HepG2 (cell line): ENCODE measurements at regions of chr21 and their contacts with region 1.

Region 1: DNA sequence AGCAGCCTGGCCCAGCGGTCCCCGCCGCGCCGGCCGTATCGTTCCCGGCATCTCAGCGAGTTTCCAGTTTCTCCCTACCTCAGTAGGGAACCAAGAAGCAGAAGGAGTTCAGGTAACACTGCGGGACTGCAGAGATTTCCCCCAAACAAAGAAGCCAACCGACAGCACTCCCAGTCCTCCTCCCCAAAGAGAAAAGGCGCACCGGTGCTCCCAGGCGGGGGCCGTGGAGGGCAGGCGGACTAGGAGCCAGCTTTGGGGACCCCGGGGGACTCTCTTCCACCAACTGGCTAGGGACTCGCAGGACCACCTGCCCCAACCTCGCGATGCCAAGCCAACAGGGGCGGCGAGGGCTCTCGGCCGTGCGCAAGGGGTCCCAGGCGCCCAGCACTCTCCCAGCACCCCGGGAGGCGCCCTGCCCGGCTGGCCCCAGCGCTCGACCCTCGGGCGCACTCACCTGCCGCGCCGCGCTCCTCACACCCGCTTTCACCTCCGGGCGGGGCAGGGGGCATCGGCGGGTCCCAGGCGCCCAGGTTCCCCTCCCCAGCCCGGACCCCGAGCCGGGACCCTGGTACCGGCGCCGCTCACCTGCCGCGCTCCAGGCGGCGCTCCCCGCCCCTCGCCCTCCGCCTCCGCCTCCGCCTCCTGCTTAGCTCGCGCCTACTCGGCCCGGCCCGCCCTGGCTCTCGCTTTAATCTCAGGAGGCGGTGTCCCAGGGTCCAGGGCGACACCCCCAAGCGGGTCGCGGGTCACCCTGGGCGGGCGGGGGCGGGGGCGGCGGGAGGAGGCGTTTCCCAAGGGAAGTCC is at the start of gene TMPRSS2:
- DNase-seq: no peak
- ATAC-seq: peak; percentile 73
- H3K4me3 ChIP-seq: peak within 1 kb of the TSS; percentile 52 to 67 (median 58); a peak in 5 of 6 replicates
- H3K27ac ChIP-seq: no peak within 1 kb of the TSS
- H3K4me1 ChIP-seq: peaks cover 39% of the 10 kb centered on the region
- H3K27me3 ChIP-seq: peaks cover 2 to 31% of the 10 kb centered on the region in 2 experiments; a peak in 4 of 5 replicates
- CTCF ChIP-seq: no peak
- EP300 ChIP-seq: no peak
- POLR2A ChIP-seq: no peak
- RAD21 ChIP-seq: no peak
- total RNA-seq, gene TMPRSS2: 0.86 and 1.8 TPM in 2 replicates

Region 2: GRCh38 chr21:41497008-41497407 is 10.7 kb before region 1 on chr21:
- CTCF ChIA-PET with region 1: no interaction called
- POLR2A ChIA-PET with region 1: interaction called, 18 read pairs
- in situ Hi-C with region 1: no loop called
- intact Hi-C with region 1: no loop called
- DNase-seq: peak; percentile 76
- ATAC-seq: peak; percentile 84
- H3K4me3 ChIP-seq: no peak overlapping the region
- H3K27ac ChIP-seq: peak overlapping the region; percentile 32
- H3K4me1 ChIP-seq: peaks cover 57% of the 10 kb centered on the region
- H3K27me3 ChIP-seq: no peaks in the 10 kb centered on the region
- CTCF ChIP-seq: no peak
- EP300 ChIP-seq: peak in 1 of 2 experiments; percentile 25; a peak in 1 of 4 replicates
- POLR2A ChIP-seq: no peak
- RAD21 ChIP-seq: no peak

Region 3: GRCh38 chr21:41535819-41536640 is 28.3 kb after region 1 on chr21:
- CTCF ChIA-PET with region 1: no interaction called
- POLR2A ChIA-PET with region 1: no interaction called
- in situ Hi-C with region 1: no loop called
- intact Hi-C with region 1: loop called (anchors 1 kb)
- DNase-seq: no peak
- ATAC-seq: peak; percentile 30; the same call in 1 of the 3 replicates
- H3K4me3 ChIP-seq: no peak overlapping the region
- H3K27ac ChIP-seq: no peak overlapping the region
- H3K4me1 ChIP-seq: peaks cover 14% of the 10 kb centered on the region
- H3K27me3 ChIP-seq: peaks cover 0 to 18% of the 10 kb centered on the region in 2 experiments; a peak in 4 of 5 replicates
- CTCF ChIP-seq: no peak
- EP300 ChIP-seq: no peak
- POLR2A ChIP-seq: no peak
- RAD21 ChIP-seq: no peak

Region 4: DNA sequence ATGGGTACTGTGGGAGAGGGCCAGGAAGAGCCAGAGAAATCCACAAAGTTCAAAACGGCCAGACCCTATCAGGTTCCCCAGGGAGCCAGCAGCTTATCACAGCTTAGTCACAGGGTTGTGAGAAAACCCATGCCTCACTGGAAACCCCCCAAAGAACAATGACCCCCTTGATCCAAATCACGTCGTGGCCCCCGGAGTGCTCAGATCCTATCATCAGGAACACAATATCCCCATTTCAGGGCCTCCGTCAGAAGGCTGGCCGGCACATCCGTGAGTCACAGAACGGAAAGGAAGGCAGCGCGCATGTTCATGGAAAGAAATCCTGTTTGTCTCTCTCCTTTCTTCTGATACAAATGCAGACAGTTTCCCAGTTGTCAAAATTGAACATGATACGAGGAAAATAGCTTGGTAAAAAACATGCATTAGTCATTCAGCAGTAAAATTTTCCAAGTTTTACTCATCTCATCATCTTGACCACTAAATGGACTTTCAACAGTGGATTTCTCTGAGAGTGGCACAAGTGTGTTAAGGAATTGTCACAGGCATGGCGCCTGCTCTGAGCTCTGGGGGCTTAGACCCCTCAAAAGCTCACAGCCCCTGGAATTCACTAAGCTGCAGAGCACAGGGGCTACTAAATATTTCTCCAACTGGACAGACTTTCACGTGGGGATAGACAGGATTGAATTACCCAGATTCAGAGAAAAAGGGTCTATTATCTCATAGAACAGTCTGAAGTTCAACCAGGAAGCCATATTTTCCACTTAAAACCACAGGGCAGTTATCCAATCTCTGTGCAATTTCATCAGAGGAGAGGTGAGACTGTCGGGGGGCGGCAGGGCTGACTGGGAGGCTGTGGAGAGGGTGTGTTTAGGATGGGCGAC is 134.4 kb after region 1 on chr21:
- CTCF ChIA-PET with region 1: no interaction called
- POLR2A ChIA-PET with region 1: no interaction called
- in situ Hi-C with region 1: no loop called
- intact Hi-C with region 1: no loop called
- DNase-seq: peak; percentile 41
- ATAC-seq: peak; percentile 49; the same call in 2 of the 3 replicates
- H3K4me3 ChIP-seq: peak overlapping the region in 2 of 3 experiments; percentile 12 to 34; a peak in 3 of 6 replicates
- H3K27ac ChIP-seq: no peak overlapping the region
- H3K4me1 ChIP-seq: peaks cover 18% of the 10 kb centered on the region
- H3K27me3 ChIP-seq: peaks cover 0 to 8% of the 10 kb centered on the region in 2 experiments; a peak in 2 of 5 replicates
- CTCF ChIP-seq: no peak
- EP300 ChIP-seq: no peak
- POLR2A ChIP-seq: no peak
- RAD21 ChIP-seq: no peak

Region 5: DNA sequence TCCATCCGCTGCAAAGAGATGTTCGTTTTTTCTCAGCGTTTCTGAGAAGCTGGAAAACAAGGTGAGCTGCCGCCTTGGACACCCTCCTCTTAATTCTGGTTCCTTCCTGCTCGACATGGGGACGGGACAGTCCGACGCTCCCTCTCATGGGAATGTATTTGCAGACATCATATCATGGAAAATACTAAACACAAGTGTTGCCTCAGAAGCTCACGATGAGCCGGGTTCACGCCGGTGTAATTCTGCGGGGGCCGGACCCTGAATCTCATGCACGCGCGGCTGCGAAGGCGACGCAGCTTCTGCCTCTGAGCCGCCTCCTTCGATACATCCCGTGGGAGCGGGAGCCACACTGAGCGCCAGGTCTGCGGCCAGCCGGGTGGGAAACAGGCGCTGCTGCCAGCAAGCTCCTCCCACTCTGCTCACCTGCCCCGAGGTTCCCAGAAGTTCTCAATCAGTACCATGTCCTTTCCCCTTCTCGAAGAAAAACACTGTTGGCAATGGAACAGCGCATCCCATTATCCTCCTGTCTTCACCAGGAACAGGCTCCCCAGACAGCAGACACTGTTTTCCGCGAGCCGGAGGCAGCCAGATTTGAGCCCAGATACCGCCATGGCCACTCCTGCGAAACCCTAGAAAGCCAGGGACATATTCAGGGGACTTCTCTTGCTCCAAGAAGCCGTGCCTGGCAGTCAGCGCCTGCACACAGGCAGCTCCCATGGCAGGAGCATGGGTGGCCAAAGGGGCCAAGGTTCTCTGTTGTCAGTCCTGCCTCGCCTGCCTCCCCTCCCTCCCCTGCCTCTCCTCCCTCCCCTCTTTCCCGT is 1273.7 kb after region 1 on chr21:
- CTCF ChIA-PET with region 1: no interaction called
- POLR2A ChIA-PET with region 1: no interaction called
- in situ Hi-C with region 1: no loop called
- intact Hi-C with region 1: no loop called
- DNase-seq: peak; percentile 32
- ATAC-seq: peak; percentile 56
- H3K4me3 ChIP-seq: peak overlapping the region; percentile 48 to 72 (median 57)
- H3K27ac ChIP-seq: peak overlapping the region; percentile 52
- H3K4me1 ChIP-seq: peaks cover 60% of the 10 kb centered on the region
- H3K27me3 ChIP-seq: peaks cover 0 to 9% of the 10 kb centered on the region in 2 experiments; a peak in 1 of 5 replicates
- CTCF ChIP-seq: peak; percentile 60
- EP300 ChIP-seq: no peak
- POLR2A ChIP-seq: no peak
- RAD21 ChIP-seq: no peak